CD8-positive, alpha-beta T cell (primary cell): ENCODE measurements at regions of chr7 and their contacts with region 1.

Region 1: DNA sequence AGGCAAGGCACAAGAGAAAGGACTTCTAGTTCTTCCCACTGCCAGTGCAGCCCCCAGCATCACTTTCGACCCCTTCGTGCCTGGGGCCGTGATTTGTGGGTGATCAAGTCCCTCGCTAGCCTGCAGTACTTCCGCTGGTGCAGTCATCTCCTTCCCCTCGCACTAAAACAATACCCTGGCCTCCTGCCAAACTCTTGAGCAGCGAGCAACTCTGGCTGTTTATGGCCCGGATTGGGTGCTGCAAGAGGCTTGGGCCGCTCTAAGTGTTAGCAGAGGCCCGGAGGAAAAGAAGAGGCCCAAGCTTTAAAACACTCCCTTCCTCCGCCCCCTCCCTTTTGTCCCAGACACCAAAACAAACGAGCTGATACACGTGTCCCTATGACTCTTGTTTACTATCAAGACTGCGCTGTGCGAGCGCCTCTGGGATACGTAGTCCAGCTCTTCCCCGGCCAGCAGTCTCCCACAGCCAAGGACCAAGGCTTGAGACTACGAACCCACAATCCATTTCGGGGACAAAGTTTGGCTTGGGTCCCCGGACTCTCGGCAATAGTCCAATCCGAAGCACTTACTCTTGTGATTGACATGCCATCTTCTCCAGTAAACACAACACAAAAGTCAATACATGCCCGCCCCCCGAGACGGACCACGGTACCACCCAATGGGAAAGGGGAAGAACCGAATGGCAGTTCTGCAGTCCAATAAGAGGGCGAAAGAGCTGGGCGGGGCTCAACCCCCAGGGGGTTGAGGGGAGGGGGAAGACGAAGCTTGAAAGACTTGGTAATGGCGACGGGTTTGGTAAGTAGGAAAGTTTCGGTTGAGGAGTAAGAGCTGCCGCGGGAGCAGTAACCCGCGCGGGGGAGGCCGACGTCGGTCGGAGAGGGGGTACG is at the start of gene HBP1:
- DNase-seq: peak; percentile 95 to 100 (median 98)
- ATAC-seq: peak; percentile 77
- H3K4me3 ChIP-seq: peak within 1 kb of the TSS; percentile 85 to 93
- H3K4me3 Mint-ChIP-seq: peak within 1 kb of the TSS; percentile 94
- H3K27ac ChIP-seq: peak within 1 kb of the TSS; percentile 96 to 98
- H3K27ac Mint-ChIP-seq: peak within 1 kb of the TSS; percentile 99
- H3K4me1 ChIP-seq: peaks cover 36% of the 10 kb centered on the region
- H3K4me1 Mint-ChIP-seq: peaks cover 35% of the 10 kb centered on the region
- H3K27me3 ChIP-seq: no peaks in the 10 kb centered on the region
- H3K27me3 Mint-ChIP-seq: no peaks in the 10 kb centered on the region
- CTCF ChIP-seq: no peak
- total RNA-seq, gene HBP1: 233 to 251 TPM

Region 2: DNA sequence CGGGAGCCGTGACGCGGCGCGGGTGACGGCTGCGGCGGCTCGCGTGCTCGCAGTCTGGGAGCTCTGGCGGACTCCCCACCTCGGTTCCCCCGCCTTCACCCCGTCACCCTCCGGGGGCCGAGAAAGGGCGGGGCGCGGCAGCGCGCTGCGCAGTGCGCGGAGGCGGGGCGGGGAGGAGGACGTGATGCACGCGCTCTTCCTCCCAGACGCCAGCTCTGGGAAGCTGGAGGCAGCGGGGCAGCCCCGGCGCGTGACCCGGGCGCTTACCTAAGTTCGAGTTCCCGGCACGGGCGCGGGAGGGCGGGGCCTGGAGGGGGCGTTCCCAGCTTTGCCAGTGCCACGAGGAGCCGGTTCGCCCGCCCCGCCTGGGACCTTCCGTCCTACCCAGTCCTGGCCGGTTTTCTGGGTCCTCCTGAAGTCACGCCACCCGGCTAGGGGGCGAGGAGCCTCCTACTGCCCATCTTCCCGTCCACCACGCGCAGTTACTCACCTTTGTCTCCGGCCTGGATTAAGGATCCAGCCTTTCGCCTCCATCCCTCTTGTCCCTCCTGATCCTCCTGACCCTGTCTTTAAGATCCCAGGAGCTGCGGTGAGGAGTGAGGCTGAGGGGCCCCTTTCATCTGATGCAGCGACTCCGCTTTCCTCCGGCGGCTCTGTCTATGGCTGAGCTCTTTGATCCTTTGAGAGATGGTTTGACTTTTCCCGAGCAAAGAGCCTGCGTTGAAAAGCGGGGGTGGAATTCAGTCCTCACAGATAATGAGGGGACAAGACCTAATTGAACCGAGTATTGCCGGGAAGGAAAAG is 883.2 kb before region 1 on chr7:
- CTCF ChIA-PET with region 1: interaction called, 3 read pairs
- POLR2A ChIA-PET with region 1: interaction called, 13 read pairs
- intact Hi-C with region 1: loop called in 1 of 2 experiments (anchors 2 kb)
- DNase-seq: peak; percentile 92 to 99 (median 96)
- ATAC-seq: peak; percentile 89
- H3K4me3 ChIP-seq: peak overlapping the region; percentile 81 to 83
- H3K4me3 Mint-ChIP-seq: peak overlapping the region; percentile 96
- H3K27ac ChIP-seq: peak overlapping the region; percentile 71 to 93
- H3K27ac Mint-ChIP-seq: peak overlapping the region; percentile 98
- H3K4me1 ChIP-seq: peaks cover 17% of the 10 kb centered on the region
- H3K4me1 Mint-ChIP-seq: peaks cover 27% of the 10 kb centered on the region
- H3K27me3 ChIP-seq: no peaks in the 10 kb centered on the region
- H3K27me3 Mint-ChIP-seq: peaks cover 2% of the 10 kb centered on the region
- CTCF ChIP-seq: no peak

Region 3: GRCh38 chr7:106865130-106866041 is 303.1 kb before region 1 on chr7 and contains the start of gene PIK3CG:
- CTCF ChIA-PET with region 1: no interaction called
- POLR2A ChIA-PET with region 1: interaction called, 11 read pairs
- intact Hi-C with region 1: loop called (anchors 2 to 5 kb)
- DNase-seq: peak in 6 of 9 experiments; percentile 18 to 84 (median 40)
- ATAC-seq: peak; percentile 92
- H3K4me3 ChIP-seq: peak within 1 kb of the TSS; percentile 69 to 73
- H3K4me3 Mint-ChIP-seq: peak within 1 kb of the TSS; percentile 93
- H3K27ac ChIP-seq: peak within 1 kb of the TSS; percentile 71 to 87
- H3K27ac Mint-ChIP-seq: peak within 1 kb of the TSS; percentile 95
- H3K4me1 ChIP-seq: peaks cover 57% of the 10 kb centered on the region
- H3K4me1 Mint-ChIP-seq: peaks cover 75% of the 10 kb centered on the region
- H3K27me3 ChIP-seq: no peaks in the 10 kb centered on the region
- H3K27me3 Mint-ChIP-seq: no peaks in the 10 kb centered on the region
- CTCF ChIP-seq: no peak
- total RNA-seq, gene PIK3CG: 30.8 to 32.5 TPM

Region 4: GRCh38 chr7:106982415-106982814 is 186.1 kb before region 1 on chr7:
- CTCF ChIA-PET with region 1: no interaction called
- POLR2A ChIA-PET with region 1: no interaction called
- intact Hi-C with region 1: no loop called
- DNase-seq: no peak
- ATAC-seq: no peak
- H3K4me3 ChIP-seq: no peak overlapping the region
- H3K4me3 Mint-ChIP-seq: no peak overlapping the region
- H3K27ac ChIP-seq: no peak overlapping the region
- H3K27ac Mint-ChIP-seq: no peak overlapping the region
- H3K4me1 ChIP-seq: no peaks in the 10 kb centered on the region
- H3K4me1 Mint-ChIP-seq: no peaks in the 10 kb centered on the region
- H3K27me3 ChIP-seq: no peaks in the 10 kb centered on the region
- H3K27me3 Mint-ChIP-seq: no peaks in the 10 kb centered on the region
- CTCF ChIP-seq: no peak

Region 5: GRCh38 chr7:107130487-107131225 is 37.8 kb before region 1 on chr7:
- CTCF ChIA-PET with region 1: interaction called, 4 read pairs
- POLR2A ChIA-PET with region 1: interaction called, 48 read pairs
- intact Hi-C with region 1: loop called in 1 of 2 experiments (anchors 2 kb)
- DNase-seq: no peak
- ATAC-seq: no peak
- H3K4me3 ChIP-seq: no peak overlapping the region
- H3K4me3 Mint-ChIP-seq: no peak overlapping the region
- H3K27ac ChIP-seq: no peak overlapping the region
- H3K27ac Mint-ChIP-seq: no peak overlapping the region
- H3K4me1 ChIP-seq: peaks cover 8% of the 10 kb centered on the region
- H3K4me1 Mint-ChIP-seq: peaks cover 15% of the 10 kb centered on the region
- H3K27me3 ChIP-seq: no peaks in the 10 kb centered on the region
- H3K27me3 Mint-ChIP-seq: no peaks in the 10 kb centered on the region
- CTCF ChIP-seq: no peak

Region 6: DNA sequence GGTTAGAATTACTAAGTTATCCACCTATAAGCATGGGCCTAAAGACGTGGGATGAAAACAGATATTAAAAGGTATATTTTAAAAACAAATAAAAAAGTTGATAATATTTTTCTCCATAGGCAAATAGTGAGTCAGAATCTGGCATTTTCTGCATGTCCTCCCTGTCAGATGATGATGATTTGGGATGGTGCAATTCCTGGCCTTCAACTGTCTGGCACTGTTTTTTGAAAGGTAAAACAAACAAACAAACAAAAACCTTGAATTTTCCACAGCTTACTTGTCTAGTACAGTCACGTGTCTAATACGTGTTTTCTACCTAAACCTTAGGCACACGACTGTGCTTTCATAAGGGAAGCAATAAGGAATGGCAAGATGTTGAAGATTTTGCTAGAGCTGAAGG is 17.8 kb after region 1 on chr7:
- CTCF ChIA-PET with region 1: interaction called, 4 read pairs
- POLR2A ChIA-PET with region 1: interaction called, 28 read pairs
- intact Hi-C with region 1: no loop called
- DNase-seq: no peak
- ATAC-seq: no peak
- H3K4me3 ChIP-seq: no peak overlapping the region
- H3K4me3 Mint-ChIP-seq: no peak overlapping the region
- H3K27ac ChIP-seq: no peak overlapping the region
- H3K27ac Mint-ChIP-seq: no peak overlapping the region
- H3K4me1 ChIP-seq: no peaks in the 10 kb centered on the region
- H3K4me1 Mint-ChIP-seq: peaks cover 29% of the 10 kb centered on the region
- H3K27me3 ChIP-seq: no peaks in the 10 kb centered on the region
- H3K27me3 Mint-ChIP-seq: no peaks in the 10 kb centered on the region
- CTCF ChIP-seq: no peak

Region 7: GRCh38 chr7:107387128-107387527 is 218.7 kb after region 1 on chr7:
- CTCF ChIA-PET with region 1: no interaction called
- POLR2A ChIA-PET with region 1: no interaction called
- intact Hi-C with region 1: no loop called
- DNase-seq: no peak
- ATAC-seq: no peak
- H3K4me3 ChIP-seq: no peak overlapping the region
- H3K4me3 Mint-ChIP-seq: no peak overlapping the region
- H3K27ac ChIP-seq: no peak overlapping the region
- H3K27ac Mint-ChIP-seq: no peak overlapping the region
- H3K4me1 ChIP-seq: no peaks in the 10 kb centered on the region
- H3K4me1 Mint-ChIP-seq: no peaks in the 10 kb centered on the region
- H3K27me3 ChIP-seq: no peaks in the 10 kb centered on the region
- H3K27me3 Mint-ChIP-seq: no peaks in the 10 kb centered on the region
- CTCF ChIP-seq: no peak

Region 8: DNA sequence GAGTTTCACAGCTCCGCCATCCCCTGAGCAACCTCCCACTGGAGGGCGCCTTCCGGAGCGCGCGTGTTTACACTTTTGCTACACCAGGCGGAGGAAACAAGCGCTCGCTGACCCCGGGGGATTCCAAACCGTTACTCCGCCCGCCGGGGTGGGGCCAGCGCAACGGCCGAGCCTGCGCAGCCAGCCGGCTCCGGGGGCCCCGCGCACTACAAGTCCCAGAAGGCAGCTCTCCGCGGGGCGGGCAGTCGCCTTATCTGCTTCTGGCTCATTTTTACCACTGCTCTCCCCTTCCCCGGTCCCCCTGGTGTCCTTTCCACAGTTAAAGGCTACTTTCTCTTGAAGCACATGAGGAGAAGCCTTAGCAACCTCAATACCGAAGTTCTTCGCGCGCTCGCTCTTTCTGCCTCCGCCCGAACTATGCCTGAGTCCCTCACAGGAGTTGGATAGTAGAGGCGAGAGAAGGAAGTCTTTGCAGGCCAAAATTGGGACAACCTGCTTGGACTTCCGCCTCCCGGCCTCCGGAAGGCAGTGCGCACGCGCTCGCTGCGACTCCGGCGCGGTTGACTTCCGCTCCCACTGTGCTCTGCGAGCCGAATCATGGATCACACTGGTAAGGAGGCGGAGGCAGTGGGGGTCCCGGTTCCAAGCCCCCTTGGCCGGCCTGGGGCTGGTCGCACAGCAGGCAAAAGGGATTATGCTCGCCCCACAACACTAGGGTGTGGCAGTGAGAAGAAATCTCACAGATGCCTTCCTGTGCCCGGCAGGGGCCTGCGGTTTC is 575.3 kb after region 1 on chr7 and contains the start of gene CBLL1:
- CTCF ChIA-PET with region 1: interaction called, 6 read pairs
- POLR2A ChIA-PET with region 1: interaction called, 39 read pairs
- intact Hi-C with region 1: loop called (anchors 1 to 2 kb)
- DNase-seq: peak; percentile 96 to 99 (median 98)
- ATAC-seq: peak; percentile 91
- H3K4me3 ChIP-seq: peak within 1 kb of the TSS; percentile 90 to 99
- H3K4me3 Mint-ChIP-seq: peak within 1 kb of the TSS; percentile 92
- H3K27ac ChIP-seq: peak within 1 kb of the TSS; percentile 99
- H3K27ac Mint-ChIP-seq: peak within 1 kb of the TSS; percentile 100
- H3K4me1 ChIP-seq: peaks cover 46% of the 10 kb centered on the region
- H3K4me1 Mint-ChIP-seq: peaks cover 59% of the 10 kb centered on the region
- H3K27me3 ChIP-seq: no peaks in the 10 kb centered on the region
- H3K27me3 Mint-ChIP-seq: no peaks in the 10 kb centered on the region
- CTCF ChIP-seq: peak; percentile 68
- total RNA-seq, gene CBLL1: 68.5 to 71.6 TPM